Upper lobe of right lung (tissue), 1 donor: ENCODE measurements at regions of chr1 and their contacts with region 1.

Region 1: GRCh38 chr1:223748773-223749733 is 36.7 kb downstream of the CAPN2 start:
- DNase-seq: peak; percentile 84
- ATAC-seq: peak; percentile 90
- H3K4me3 ChIP-seq: peak overlapping the region; percentile 55
- H3K27ac ChIP-seq: peak overlapping the region; percentile 76
- H3K4me1 ChIP-seq: peaks cover 17% of the 10 kb centered on the region
- H3K27me3 ChIP-seq: no peaks in the 10 kb centered on the region
- CTCF ChIP-seq: peak; percentile 97

Region 2: GRCh38 chr1:223665552-223666312 is 83.3 kb before region 1 on chr1 and contains the start of gene CAPN8:
- intact Hi-C with region 1: no loop called
- DNase-seq: no peak
- ATAC-seq: peak; percentile 88
- H3K4me3 ChIP-seq: peak within 1 kb of the TSS; percentile 32
- H3K27ac ChIP-seq: peak within 1 kb of the TSS; percentile 55
- H3K4me1 ChIP-seq: no peaks in the 10 kb centered on the region
- H3K27me3 ChIP-seq: no peaks in the 10 kb centered on the region
- CTCF ChIP-seq: no peak
- total RNA-seq, gene CAPN8: 83.5 TPM

Region 3: DNA sequence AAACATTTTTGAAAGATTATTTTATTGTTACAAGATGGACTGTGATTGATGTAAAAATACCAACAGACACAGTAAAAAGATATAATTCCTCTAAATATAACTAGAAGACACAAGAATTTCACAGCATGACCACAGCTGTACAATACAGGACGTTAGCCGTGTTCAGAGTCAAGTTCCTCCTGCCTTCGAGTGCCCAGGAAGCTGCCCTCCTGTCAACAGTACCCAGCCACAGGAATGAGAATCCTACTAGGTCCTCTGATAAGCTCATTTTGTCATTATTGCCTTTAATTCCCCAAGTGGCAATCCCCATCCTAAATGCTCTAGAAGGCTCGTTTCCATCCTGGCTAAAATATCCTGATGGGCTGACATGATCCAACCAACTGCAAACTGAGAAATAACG is 53.1 kb before region 1 on chr1:
- intact Hi-C with region 1: loop called (anchors 5 kb)
- DNase-seq: no peak
- ATAC-seq: peak; percentile 40
- H3K4me3 ChIP-seq: no peak overlapping the region
- H3K27ac ChIP-seq: no peak overlapping the region
- H3K4me1 ChIP-seq: no peaks in the 10 kb centered on the region
- H3K27me3 ChIP-seq: no peaks in the 10 kb centered on the region
- CTCF ChIP-seq: no peak

Region 4: DNA sequence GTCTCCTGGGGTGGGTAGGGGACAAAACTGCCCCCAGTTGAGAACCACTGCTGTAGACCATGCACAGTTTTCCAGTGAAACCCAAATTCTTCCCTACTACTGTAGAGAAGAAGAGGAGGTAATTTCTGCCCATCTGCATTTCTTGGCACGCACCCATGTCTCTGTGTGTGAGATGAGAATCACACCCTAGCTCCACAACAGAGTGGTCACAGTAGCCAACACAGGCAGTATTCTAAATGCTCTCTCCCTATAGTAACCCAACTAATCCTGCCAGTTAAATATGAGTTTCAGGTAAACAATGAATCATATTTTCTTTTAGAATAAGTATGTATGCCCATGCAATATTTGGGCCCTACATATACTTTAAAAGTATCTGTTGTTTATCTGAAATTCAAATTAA is 37.9 kb before region 1 on chr1:
- intact Hi-C with region 1: loop called (anchors 2 kb)
- DNase-seq: no peak
- ATAC-seq: no peak
- H3K4me3 ChIP-seq: no peak overlapping the region
- H3K27ac ChIP-seq: no peak overlapping the region
- H3K4me1 ChIP-seq: peaks cover 55% of the 10 kb centered on the region
- H3K27me3 ChIP-seq: no peaks in the 10 kb centered on the region
- CTCF ChIP-seq: no peak